AG04450 (cell line): ENCODE measurements at regions of chr2 and their contacts with region 1.

Region 1: DNA sequence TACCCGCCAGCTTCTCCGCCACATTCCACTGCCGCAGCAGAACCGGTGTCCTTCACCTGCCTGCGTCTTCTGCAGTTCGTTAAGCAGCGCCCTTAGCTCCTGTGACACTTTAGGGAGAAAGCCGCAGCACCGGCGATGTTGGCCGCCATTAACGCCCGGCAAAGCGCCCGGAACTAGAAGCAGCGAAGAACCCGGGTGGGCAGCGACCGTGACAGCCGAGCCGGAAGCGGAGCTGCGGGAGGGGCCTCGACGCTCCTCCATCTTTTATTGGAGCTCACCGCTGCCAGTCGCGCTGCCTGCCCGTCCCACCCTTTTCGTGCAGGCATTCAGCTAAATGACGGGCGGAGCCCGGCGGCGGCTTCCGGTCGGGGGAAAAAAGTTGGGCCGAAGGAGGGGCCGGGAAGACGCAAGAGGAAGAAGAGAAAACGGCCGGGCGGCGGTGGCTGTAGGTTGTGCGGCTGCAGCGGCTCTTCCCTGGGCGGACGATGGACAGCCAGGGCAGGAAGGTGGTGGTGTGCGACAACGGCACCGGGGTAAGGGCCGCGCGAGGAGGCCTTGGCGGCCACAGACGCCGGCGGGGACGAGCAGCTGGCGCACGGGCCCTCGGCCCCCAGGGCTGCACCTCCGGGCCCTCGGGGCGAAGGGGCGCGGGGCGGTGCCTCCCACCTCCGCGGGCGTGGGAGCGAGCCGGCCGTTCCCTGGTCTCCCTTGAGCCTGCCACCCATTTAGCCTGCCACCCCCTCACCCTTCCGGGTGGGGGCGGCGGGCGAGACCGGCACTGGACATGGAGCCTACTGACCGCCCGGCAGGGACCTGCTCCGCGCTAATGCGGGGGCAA is at the start of gene ACTR2:
- DNase-seq: peak; percentile 93
- H3K4me3 ChIP-seq: peak within 1 kb of the TSS; percentile 100
- H3K27ac ChIP-seq: peak within 1 kb of the TSS; percentile 86
- H3K27me3 ChIP-seq: no peaks in the 10 kb centered on the region
- CTCF ChIP-seq: no peak
- polyA plus RNA-seq, gene ACTR2: 199 and 240 TPM in 2 replicates

Region 2: GRCh38 chr2:64945973-64946768 is 281.5 kb before region 1 on chr2:
- CTCF ChIA-PET with region 1: no interaction called
- POLR2A ChIA-PET with region 1: no interaction called
- DNase-seq: no peak
- H3K4me3 ChIP-seq: no peak overlapping the region
- H3K27ac ChIP-seq: no peak overlapping the region
- H3K27me3 ChIP-seq: peaks cover 5% of the 10 kb centered on the region
- CTCF ChIP-seq: no peak

Region 3: GRCh38 chr2:65056215-65057053 is 171.2 kb before region 1 on chr2 and contains the start of gene CEP68:
- CTCF ChIA-PET with region 1: no interaction called
- POLR2A ChIA-PET with region 1: interaction called, 17 read pairs
- DNase-seq: peak; percentile 93
- H3K4me3 ChIP-seq: peak within 1 kb of the TSS; percentile 78
- H3K27ac ChIP-seq: no peak within 1 kb of the TSS
- H3K27me3 ChIP-seq: no peaks in the 10 kb centered on the region
- CTCF ChIP-seq: no peak
- polyA plus RNA-seq, gene CEP68: 7.3 and 7.9 TPM in 2 replicates

Region 4: DNA sequence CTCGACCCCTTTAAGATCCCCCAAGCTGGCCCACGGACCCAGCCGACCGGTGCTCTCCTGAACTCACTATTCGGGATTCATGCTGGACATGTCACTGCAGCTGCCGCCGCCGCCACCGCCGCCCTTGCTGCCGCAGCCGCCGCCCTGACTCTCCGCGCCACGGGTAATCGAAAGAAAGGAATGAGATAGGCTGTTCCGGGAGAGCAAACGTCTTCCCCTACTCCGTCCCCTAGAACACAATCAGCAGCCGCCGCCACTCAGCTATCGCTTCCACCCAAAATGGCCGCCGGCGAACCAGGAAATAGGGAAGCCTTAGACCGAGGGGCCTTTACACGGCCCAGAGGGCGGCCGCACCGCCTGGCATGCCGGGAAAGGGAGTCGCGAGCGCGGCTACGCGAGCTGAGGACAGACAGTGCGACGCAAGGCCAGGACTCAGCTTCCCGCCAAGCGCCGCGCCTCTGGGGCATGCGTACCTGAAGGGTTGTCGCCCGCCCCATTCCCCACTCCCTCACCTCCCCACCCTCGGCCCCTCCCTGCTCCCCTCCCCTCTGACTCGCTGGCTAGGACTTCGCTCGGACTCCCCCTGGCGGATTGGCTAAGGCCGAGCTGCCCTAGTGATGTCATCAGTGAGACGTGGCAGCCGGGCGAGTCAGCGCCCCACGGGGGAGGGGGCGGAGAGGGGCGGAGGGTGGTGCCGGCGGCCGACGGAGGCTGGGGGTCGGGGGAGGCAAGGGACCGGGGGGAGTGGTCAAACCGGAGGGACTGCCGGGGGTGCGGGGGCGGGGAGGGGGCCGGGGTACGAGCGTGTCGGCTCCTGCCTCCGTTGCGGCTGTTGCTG is 97.6 kb before region 1 on chr2 and contains the start of gene RAB1A:
- CTCF ChIA-PET with region 1: no interaction called
- POLR2A ChIA-PET with region 1: interaction called, 11 read pairs
- DNase-seq: peak; percentile 99
- H3K4me3 ChIP-seq: peak within 1 kb of the TSS; percentile 93
- H3K27ac ChIP-seq: peak within 1 kb of the TSS; percentile 90
- H3K27me3 ChIP-seq: no peaks in the 10 kb centered on the region
- CTCF ChIP-seq: peak; percentile 25; the same call in 1 of the 2 replicates
- polyA plus RNA-seq, gene RAB1A: 215 and 292 TPM in 2 replicates

Region 5: GRCh38 chr2:65382776-65383357 is 155.2 kb after region 1 on chr2:
- CTCF ChIA-PET with region 1: no interaction called
- POLR2A ChIA-PET with region 1: no interaction called
- DNase-seq: peak; percentile 82
- H3K4me3 ChIP-seq: no peak overlapping the region; the same call in 1 of the 2 replicates
- H3K27ac ChIP-seq: peak overlapping the region; percentile 87
- H3K27me3 ChIP-seq: no peaks in the 10 kb centered on the region
- CTCF ChIP-seq: no peak

Region 6: DNA sequence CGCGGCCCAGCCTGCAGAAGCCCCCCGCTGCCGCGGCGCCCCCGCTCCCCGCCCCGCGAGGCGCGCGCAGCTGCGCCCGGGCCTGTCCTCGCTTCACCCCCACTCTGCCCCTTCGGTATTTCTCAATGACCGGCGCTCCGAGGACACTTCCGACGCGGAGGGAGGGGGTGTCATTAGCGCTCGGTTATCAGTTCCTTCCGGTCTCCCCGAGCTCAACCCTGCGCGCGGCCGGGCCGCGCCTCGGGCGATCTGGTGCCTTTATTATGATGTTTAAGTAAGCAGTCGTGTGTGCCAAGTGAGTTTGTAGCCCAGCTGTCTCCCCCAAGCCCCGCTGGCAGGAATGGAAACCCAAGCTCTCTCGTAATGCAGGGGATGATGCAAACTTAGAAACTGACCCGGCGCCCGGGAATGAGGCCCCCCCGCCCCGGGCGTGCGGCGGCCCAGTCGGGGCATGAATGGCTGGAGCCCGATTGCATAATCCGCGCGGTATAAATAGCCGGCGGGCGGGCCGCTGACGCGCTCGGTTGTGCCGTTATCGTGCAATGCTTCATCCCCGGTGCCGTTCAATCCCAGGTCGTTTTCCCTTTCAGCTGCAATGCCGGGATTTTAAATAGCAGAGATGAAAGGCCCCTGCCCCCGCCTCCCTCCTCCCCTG is 208.7 kb after region 1 on chr2:
- CTCF ChIA-PET with region 1: no interaction called
- POLR2A ChIA-PET with region 1: interaction called, 11 read pairs
- DNase-seq: peak; percentile 94
- H3K4me3 ChIP-seq: peak overlapping the region; percentile 69
- H3K27ac ChIP-seq: peak overlapping the region; percentile 99
- H3K27me3 ChIP-seq: no peaks in the 10 kb centered on the region
- CTCF ChIP-seq: no peak